Gastrocnemius medialis (tissue), 4 donors: ENCODE measurements at regions of chr2 and their contacts with region 1.

Region 1: GRCh38 chr2:55232084-55232862 is at the starts of genes CLHC1 and RPS27A:
- DNase-seq: peak; percentile 86 to 87
- ATAC-seq: peak; percentile 98
- H3K4me3 ChIP-seq: peak within 1 kb of the TSS; percentile 72 to 96 (median 87)
- H3K27ac ChIP-seq: peak within 1 kb of the TSS; percentile 89 to 96 (median 92)
- H3K4me1 ChIP-seq: peaks cover 23 to 24% of the 10 kb centered on the region in 2 donors
- H3K27me3 ChIP-seq: no peaks in the 10 kb centered on the region
- CTCF ChIP-seq: peak in 2 of 5 experiments; percentile 9 to 16
- POLR2A ChIP-seq: peak; percentile 85 to 87
- total RNA-seq, gene CLHC1: 0.46 to 4.9 (median 0.85) TPM in 3 of 4 donors, not detected in the other
- total RNA-seq, gene RPS27A: 884 to 1,266 (median 965) TPM

Region 2: DNA sequence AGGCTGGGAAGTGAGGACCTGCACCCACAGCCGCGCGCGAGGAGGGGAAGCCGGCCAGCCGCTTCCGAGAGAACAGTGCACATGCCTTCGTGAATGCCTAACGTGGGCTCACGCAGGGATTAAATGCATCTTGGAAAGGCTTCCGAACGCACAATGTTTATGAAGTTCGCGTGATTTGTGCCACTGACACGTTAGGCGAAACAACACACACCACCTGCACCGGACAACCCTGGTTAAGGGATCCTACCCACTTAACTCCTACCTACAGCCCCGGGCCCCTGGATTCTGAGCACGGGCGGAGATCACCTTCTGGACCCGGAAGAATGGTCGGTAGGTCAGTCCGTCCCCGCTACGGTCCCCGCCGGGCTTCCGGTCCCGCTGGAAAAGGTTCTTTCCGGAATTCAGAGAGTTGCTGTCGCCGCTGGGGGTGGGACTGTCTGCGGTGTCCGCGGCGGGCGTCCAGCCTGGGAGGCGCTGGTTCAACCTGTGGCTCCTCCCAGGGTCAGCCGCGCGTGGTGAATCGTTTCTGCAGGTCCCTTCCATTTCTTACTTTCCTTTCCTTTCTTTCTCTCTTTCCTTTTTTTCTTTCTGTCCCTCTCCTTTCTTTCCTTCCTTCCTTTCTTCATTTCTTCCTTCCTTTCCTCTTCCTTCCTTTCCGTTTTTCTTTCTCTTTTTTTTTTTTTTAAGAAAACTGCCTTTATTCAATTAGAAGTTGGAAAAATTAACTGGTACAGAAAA is 36.8 kb after region 1 on chr2 and contains the start of gene MTIF2:
- in situ Hi-C with region 1: no loop called
- intact Hi-C with region 1: loop called (anchors 1 kb)
- DNase-seq: peak; percentile 94 to 96
- ATAC-seq: peak; percentile 98 to 99
- H3K4me3 ChIP-seq: peak within 1 kb of the TSS; percentile 75 to 83 (median 79)
- H3K27ac ChIP-seq: peak within 1 kb of the TSS; percentile 81 to 93 (median 88)
- H3K4me1 ChIP-seq: peaks cover 6 to 16% of the 10 kb centered on the region in 2 donors
- H3K27me3 ChIP-seq: no peaks in the 10 kb centered on the region
- CTCF ChIP-seq: peak in 2 of 5 experiments; percentile 29 to 30
- POLR2A ChIP-seq: peak in 1 of 2 donors; percentile 57
- total RNA-seq, gene MTIF2: 23.0 to 42.5 (median 34.7) TPM